ENCODE measurements at regions of chr7 and their contacts with region 1.

Region 1: DNA sequence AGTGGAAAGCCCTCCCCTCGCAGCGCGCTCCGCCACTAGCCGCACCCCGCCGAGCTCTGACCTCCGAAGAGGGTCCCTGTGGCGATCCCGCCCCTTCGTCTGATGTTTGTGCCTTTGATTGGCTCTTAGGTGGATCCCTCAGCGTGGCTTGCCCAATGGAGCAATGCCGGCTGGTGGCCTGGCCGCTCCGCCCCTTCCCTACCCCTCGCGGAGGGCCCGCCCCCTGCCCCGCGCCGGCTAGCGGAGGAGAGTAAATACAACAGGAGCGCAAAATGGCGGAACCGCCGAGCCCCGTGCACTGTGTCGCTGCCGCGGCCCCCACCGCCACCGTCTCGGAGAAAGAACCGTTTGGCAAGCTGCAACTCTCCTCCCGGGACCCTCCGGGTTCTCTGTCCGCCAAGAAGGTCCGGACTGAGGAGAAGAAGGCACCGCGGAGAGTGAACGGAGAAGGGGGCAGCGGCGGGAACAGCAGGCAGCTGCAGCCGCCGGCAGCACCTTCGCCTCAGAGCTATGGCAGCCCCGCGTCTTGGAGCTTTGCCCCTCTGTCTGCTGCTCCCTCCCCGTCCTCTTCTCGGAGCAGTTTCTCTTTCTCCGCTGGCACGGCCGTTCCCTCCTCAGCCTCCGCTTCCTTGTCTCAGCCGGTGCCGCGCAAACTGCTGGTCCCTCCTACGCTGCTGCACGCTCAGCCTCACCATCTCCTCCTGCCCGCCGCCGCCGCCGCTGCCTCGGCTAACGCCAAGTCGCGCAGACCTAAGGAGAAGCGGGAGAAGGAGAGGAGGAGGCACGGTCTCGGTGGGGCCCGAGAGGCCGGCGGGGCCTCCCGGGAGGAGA is at the start of gene RSBN1L:
- DNase-seq: peak; percentile 96
- CTCF ChIP-seq: peak; percentile 24

Region 2: DNA sequence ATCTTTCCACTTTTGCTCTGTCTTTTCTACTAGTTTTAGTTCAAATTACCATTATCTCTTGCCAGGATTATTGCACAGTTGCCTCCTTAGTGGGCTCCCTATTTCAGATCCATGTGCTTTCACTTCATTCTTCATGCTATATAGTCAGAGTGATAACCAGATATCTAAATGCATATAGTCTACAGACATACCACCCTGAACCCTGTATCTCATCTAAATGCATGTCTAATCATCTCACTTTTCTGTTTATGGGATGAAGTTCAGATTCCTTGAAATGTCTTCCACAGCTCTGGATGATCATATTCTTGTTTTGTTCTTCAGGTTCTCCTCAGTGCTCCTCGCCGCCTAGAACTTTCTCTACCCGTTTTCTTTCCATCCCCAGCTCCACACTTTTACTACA is 13.7 kb after region 1 on chr7:
- CTCF ChIA-PET with region 1: interaction called, 3 read pairs
- POLR2A ChIA-PET with region 1: interaction called, 11 read pairs
- DNase-seq: no peak
- CTCF ChIP-seq: no peak